ENCODE measurements at regions of chr12 and their contacts with region 1.

Region 1: DNA sequence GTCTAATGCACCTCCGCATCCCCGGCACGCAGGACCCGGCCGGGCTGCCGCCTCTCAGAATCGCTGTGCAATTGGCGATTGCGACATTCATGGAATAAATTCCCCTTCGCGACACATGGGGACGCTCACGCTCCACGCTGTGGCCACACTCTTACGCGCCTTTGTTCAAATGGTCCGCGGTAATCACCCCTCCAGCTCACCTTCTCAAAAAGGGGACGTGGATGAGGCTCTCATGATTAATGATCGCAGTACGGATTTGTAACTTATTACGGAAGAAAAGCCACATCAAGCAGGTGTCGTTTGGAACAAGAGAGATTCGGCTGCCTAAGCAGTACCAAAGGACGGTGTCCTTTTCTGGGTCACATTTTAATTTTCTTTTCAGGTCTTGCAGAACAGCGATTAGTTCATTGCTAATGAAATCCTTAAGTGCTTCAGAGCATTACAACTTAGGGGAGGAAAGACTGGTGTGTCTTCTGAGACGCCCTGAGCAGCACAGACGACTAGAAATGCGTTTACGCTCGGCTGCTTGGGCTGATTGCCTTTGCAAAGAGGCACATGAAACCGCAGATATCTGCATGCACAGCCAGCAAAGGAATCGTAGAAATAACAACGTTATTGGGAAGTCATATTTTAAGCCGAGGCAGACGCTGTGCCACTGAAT is 37.3 kb upstream of the ADGRD1 start:
- ATAC-seq: peak; percentile 59 to 99 (median 96)
- H3K4me3 ChIP-seq: peak overlapping the region in 3 of 5 donors; percentile 1 to 19 (median 3)
- H3K27ac ChIP-seq: peak overlapping the region in 1 of 2 donors; percentile 18
- H3K4me1 ChIP-seq: peaks cover 6 to 11% of the 10 kb centered on the region in 2 donors

Region 2: GRCh38 chr12:131092901-131093603 is 176.7 kb after region 1 on chr12:
- in situ Hi-C with region 1: loop called in 1 of 9 experiments (anchors 25 kb)
- ATAC-seq: peak in 3 of 8 experiments; percentile 9 to 14 (median 13)
- H3K4me3 ChIP-seq: no peak overlapping the region
- H3K27ac ChIP-seq: no peak overlapping the region
- H3K4me1 ChIP-seq: peaks cover 8 to 14% of the 10 kb centered on the region in 2 donors

Region 3: GRCh38 chr12:131104463-131105350 is 188.3 kb after region 1 on chr12:
- in situ Hi-C with region 1: loop called in 2 of 9 experiments (anchors 25 kb)
- ATAC-seq: peak; percentile 91 to 99 (median 94)
- H3K4me3 ChIP-seq: no peak overlapping the region
- H3K27ac ChIP-seq: peak overlapping the region; percentile 13 to 29
- H3K4me1 ChIP-seq: peaks cover 19 to 27% of the 10 kb centered on the region in 2 donors

Region 4: DNA sequence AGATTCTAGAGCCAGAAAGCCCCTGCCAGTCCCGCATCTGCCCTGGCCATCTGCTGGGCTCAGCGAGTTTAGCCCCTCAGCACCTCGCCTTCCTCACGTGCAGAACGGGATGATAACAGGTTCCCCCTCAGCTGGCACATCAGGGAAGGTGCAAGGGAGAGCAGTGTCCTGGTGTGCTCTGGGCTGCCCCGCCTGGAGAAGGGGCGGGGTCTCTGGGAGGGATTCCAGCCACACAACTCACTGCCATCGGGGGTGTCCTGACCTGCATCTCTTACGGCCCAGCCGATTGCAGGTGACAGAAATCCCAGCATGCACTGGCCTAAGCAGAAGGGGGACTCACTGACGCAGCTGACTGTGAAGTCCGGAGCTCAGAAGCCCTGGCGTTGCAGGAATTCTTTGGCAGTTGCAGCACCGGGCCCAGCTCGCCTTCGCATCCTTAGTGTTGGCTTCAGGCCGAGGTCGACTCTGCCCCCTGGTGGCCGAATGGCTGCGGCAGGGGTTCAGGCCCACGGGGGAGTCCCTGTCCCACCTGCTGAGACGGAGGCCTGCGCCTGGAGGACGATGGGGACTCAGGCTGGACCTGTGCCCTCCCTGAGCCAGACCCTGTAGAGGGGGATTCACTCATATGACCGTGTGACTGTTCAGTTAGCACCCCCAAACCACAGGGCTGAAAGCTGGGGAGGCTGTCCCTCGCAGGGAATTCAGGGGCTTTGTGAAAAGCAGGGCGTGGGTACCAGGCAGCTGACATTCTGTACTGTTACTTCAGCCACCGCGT is 215.9 kb after region 1 on chr12:
- in situ Hi-C with region 1: loop called in 1 of 9 experiments (anchors 25 kb)
- ATAC-seq: peak; percentile 70 to 91 (median 80)
- H3K4me3 ChIP-seq: no peak overlapping the region
- H3K27ac ChIP-seq: peak overlapping the region; percentile 66 to 74
- H3K4me1 ChIP-seq: peaks cover 45 to 50% of the 10 kb centered on the region in 2 donors

Region 5: GRCh38 chr12:131710464-131711457 is 794.4 kb after region 1 on chr12 and contains the start of gene SFSWAP:
- in situ Hi-C with region 1: loop called in 1 of 9 experiments (anchors 25 kb)
- ATAC-seq: peak; percentile 85 to 98 (median 98)
- H3K4me3 ChIP-seq: peak within 1 kb of the TSS; percentile 57 to 98 (median 92)
- H3K27ac ChIP-seq: peak within 1 kb of the TSS; percentile 98 to 99
- H3K4me1 ChIP-seq: peaks cover 11 to 15% of the 10 kb centered on the region in 2 donors
- total RNA-seq, gene SFSWAP: 25.2 to 84.4 (median 29.3) TPM

Region 6: DNA sequence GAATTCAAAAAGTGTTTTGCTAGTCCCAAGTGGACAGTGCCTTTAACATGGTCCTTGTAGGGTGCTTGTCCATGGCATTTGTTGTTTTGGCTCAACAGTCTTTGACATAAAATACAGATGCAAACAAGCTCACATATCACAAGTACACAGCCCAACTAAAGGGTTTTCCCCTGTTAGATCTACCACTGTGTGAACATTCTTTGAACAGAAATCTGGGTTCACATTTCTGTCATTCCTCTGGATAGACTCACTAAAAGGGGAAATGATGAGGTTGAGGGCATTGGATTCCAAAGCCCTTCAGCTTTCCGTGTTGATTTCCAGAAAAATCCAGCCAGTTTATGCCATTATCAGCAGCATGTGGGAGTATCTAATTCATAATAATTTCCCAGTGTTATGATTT is 1087.5 kb after region 1 on chr12:
- in situ Hi-C with region 1: loop called in 2 of 9 experiments (anchors 25 kb)
- ATAC-seq: no peak
- H3K4me3 ChIP-seq: no peak overlapping the region
- H3K27ac ChIP-seq: no peak overlapping the region
- H3K4me1 ChIP-seq: peaks cover 0 to 17% of the 10 kb centered on the region in 2 donors